Activated B cell treated with CpG ODN at 0.5 μM for 24 hours (primary cell): ENCODE measurements at regions of chr11 and their contacts with region 1.

Region 1: DNA sequence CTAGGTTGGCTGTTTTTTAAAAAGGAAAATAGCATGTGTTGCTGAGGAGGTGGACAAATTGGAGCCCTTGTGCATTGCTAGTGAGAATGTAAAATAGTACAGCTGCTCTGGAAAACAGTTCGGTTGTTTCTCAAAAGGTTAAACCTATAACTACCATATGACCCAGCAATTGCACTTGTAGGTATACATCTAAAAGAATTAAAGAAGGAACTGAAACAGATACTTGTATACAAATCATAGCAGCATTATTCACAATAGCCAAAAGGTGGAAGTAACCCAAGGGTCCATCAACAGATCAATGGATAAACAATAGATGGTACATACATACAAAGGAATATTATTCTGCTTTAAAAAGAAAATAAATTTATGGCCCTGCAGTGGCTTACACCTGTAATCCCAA is 111.4 kb downstream of the CSTPP1 start:
- DNase-seq: no peak
- ATAC-seq: no peak
- H3K4me3 Mint-ChIP-seq: no peak overlapping the region
- H3K27ac Mint-ChIP-seq: no peak overlapping the region
- H3K4me1 Mint-ChIP-seq: peaks cover 2% of the 10 kb centered on the region
- H3K27me3 Mint-ChIP-seq: no peaks in the 10 kb centered on the region
- CTCF ChIP-seq: no peak

Region 2: GRCh38 chr11:47033439-47033838 is 14.5 kb before region 1 on chr11:
- CTCF ChIA-PET with region 1: no interaction called
- POLR2A ChIA-PET with region 1: no interaction called
- intact Hi-C with region 1: loop called (anchors 1 kb)
- DNase-seq: no peak
- ATAC-seq: no peak
- H3K4me3 Mint-ChIP-seq: no peak overlapping the region
- H3K27ac Mint-ChIP-seq: no peak overlapping the region
- H3K4me1 Mint-ChIP-seq: no peaks in the 10 kb centered on the region
- H3K27me3 Mint-ChIP-seq: no peaks in the 10 kb centered on the region
- CTCF ChIP-seq: no peak